Right cardiac atrium (tissue), 5 donors: ENCODE measurements at regions of chr1 and their contacts with region 1.

Region 1: DNA sequence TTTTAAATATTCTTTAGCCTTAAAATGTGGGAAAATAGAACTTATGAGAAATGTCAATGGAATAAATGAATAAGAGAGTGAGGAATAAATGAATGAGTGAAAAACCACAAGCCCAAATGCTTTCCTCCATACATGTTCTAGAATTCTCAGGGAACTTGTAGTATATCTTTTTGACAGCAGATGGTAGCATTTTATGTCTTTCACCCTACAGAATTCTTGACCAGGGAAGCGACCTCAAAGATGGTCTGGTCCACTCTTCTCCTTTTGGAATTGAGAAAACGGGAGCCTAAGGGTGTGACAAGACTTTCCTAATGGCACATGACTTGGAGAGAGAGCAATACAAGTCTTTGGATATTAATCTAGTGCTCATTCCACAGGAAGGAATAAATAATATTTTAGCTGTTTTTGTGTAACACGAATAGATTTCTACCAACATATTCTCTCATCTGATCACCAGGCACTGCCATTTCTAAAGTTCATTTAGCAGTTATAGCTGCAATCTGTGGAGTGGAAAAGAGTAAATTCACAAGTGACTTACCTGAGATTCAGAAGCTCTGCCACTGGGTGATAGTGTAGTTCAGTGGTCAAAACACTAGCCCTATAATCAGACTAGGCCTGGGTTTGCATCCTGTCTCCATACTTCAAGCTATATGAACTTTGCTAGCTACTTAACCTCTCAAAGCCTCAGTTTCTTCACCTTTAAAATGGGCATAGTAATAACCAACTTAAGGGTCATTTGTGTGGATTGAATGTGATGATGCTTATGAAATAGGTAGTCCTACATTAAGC is 15.0 kb upstream of the F5 start:
- DNase-seq: no peak
- ATAC-seq: peak in 1 of 2 donors; percentile 37
- H3K4me3 ChIP-seq: no peak overlapping the region
- H3K27ac ChIP-seq: no peak overlapping the region
- H3K4me1 ChIP-seq: no peaks in the 10 kb centered on the region
- H3K27me3 ChIP-seq: no peaks in the 10 kb centered on the region

Region 2: DNA sequence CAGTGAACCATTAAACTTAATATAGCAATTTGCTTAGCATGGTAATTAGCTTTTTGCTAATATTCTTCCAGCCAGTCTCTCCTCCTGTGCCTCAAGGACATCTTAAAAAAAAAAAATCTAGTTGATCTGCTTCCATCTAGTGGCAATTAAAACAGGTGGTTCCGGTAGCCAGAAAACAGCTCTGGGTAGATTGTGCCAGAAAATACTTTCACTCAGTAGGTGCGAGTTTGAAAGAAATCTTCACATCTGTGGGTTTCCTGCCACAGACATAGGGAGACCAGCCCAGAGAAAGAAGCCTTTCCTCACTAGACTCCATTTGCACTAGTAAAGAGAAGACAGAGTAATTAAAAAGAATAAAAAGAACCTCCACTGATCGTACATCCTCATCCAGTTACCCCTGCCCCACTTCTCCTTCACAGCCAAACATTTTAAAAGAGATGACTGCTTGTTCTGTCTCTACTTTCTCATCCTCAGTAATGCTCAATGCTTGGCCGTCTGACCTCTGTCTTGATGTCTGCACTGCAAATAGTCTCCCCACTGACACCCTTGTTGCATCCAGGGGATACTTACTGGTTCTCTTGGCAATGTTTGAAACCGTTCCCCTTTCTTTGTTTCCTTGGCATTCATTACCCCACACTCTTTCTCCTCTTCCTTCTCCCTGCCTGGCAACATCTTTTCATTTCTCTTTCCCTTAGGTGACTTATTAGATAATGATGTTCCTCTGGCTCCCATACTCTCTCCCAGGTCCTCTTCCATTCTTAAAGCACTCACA is 93.2 kb after region 1 on chr1:
- intact Hi-C with region 1: loop called in 1 of 4 experiments (anchors 10 kb)
- DNase-seq: no peak
- ATAC-seq: no peak
- H3K4me3 ChIP-seq: no peak overlapping the region
- H3K27ac ChIP-seq: no peak overlapping the region
- H3K4me1 ChIP-seq: no peaks in the 10 kb centered on the region
- H3K27me3 ChIP-seq: no peaks in the 10 kb centered on the region